Activated CD4-positive, alpha-beta memory T cell treated with anti-CD3 and anti-CD28 coated beads, Interleukin-2, amount 10 ng/mL, durations not matched to agents 7 days and 5 days (primary cell): ENCODE measurements at regions of chr3 and their contacts with region 1.

Region 1: DNA sequence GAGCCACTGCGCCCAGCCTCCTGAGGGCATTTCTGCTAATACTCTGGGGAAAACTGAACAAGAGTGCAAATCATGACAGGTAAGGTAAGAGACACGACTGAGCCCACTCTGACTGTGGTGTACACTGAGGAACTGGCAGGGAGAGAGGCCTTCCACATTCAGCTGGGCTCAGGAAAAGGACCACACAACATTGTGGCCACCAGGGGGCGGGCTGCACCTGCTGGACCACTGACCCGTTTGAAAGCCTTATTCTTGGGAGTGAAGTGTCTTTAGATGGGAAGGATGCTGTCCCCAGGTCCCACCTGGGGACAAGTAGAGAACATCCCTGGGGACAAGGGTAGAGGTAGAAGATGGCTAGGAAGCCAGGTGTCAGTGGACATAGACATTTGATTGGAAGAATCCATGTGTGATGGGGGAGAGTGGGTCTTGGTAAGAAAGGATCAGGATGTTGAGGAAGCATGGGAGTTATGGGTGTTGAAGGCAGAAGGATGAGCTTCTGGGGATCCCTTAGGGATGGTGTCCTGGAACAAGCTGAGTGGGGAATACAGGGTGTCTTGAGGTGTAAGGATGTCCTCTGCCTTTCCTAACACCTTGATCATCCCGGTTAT is 6.2 kb upstream of the CTDSPL start:
- DNase-seq: peak; percentile 78
- H3K4me3 Mint-ChIP-seq: no peak overlapping the region
- H3K27ac Mint-ChIP-seq: no peak overlapping the region
- H3K4me1 Mint-ChIP-seq: peaks cover 7% of the 10 kb centered on the region
- H3K27me3 Mint-ChIP-seq: peaks cover 4% of the 10 kb centered on the region

Region 2: GRCh38 chr3:37741644-37742043 is 113.8 kb before region 1 on chr3:
- CTCF ChIA-PET with region 1: no interaction called
- POLR2A ChIA-PET with region 1: no interaction called
- DNase-seq: no peak
- H3K4me3 Mint-ChIP-seq: no peak overlapping the region
- H3K27ac Mint-ChIP-seq: no peak overlapping the region
- H3K4me1 Mint-ChIP-seq: no peaks in the 10 kb centered on the region
- H3K27me3 Mint-ChIP-seq: peaks cover 17% of the 10 kb centered on the region

Region 3: GRCh38 chr3:37867144-37867543 is 11.7 kb after region 1 on chr3:
- CTCF ChIA-PET with region 1: interaction called, 10 read pairs
- POLR2A ChIA-PET with region 1: no interaction called
- DNase-seq: no peak
- H3K4me3 Mint-ChIP-seq: no peak overlapping the region
- H3K27ac Mint-ChIP-seq: no peak overlapping the region
- H3K4me1 Mint-ChIP-seq: peaks cover 9% of the 10 kb centered on the region
- H3K27me3 Mint-ChIP-seq: peaks cover 72% of the 10 kb centered on the region

Region 4: DNA sequence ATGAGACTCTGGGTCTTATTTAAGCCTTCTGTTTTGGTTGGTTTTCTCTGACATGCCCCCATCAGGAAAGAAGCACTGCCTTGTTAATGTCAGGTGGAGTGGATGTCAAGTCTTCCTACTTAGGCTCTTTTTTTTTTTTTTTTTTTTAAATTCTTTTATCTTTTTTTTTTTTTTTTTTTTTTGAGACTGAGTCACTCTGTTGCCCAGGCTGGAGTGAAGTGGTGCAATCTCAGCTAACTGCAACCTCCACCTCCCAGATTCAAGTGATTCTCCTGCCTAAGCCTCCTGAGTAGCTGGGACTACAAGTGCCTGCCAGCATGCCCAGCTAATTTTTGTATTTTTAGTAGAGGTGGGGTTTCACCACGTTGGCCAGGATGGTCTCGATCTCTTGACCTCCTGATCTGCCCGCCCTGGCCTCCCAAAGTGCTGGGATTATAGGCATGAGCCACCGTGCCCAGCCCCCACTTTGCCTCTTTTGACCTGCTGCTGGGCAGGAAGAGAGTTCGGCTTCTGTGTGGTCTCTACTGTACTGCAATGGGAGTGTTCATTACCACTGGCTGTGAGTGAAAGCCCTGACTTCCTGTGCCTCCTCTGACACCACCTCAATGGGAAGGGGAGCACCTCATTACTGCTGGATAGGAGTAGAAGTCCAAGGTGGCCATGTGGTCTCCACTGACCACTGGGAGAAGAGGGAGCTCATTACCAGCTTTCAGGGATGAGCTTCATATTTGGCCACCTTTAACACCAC is 17.1 kb after region 1 on chr3:
- CTCF ChIA-PET with region 1: interaction called, 10 read pairs
- POLR2A ChIA-PET with region 1: no interaction called
- DNase-seq: no peak
- H3K4me3 Mint-ChIP-seq: no peak overlapping the region
- H3K27ac Mint-ChIP-seq: no peak overlapping the region
- H3K4me1 Mint-ChIP-seq: peaks cover 3% of the 10 kb centered on the region
- H3K27me3 Mint-ChIP-seq: peaks cover 37% of the 10 kb centered on the region

Region 5: DNA sequence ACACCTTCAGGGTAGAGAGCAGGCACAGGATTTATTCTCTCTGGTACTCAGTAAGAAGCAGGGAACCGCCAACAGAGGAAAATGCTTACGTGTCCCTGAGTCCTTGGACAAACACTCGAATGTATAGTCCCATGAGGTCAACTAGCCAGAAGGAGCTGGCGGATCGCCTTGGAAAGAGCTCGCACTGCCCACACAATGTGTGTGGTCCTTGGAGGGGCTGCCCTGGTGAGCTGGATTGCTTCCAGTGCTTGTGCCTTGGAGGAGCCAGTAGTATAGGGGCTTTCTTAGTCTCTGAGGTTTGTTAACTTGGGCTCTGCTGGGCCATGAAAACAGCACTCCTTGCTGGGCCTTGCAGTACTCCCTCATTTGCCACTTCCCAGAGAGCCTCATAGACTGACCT is 94.4 kb after region 1 on chr3:
- CTCF ChIA-PET with region 1: no interaction called
- POLR2A ChIA-PET with region 1: no interaction called
- DNase-seq: no peak
- H3K4me3 Mint-ChIP-seq: no peak overlapping the region
- H3K27ac Mint-ChIP-seq: no peak overlapping the region
- H3K4me1 Mint-ChIP-seq: peaks cover 1% of the 10 kb centered on the region
- H3K27me3 Mint-ChIP-seq: no peaks in the 10 kb centered on the region

Region 6: GRCh38 chr3:37967260-37967881 is 111.9 kb after region 1 on chr3:
- CTCF ChIA-PET with region 1: interaction called, 129 read pairs
- POLR2A ChIA-PET with region 1: interaction called, 3 read pairs
- DNase-seq: peak; percentile 66
- H3K4me3 Mint-ChIP-seq: no peak overlapping the region
- H3K27ac Mint-ChIP-seq: no peak overlapping the region
- H3K4me1 Mint-ChIP-seq: no peaks in the 10 kb centered on the region
- H3K27me3 Mint-ChIP-seq: peaks cover 9% of the 10 kb centered on the region

Region 7: GRCh38 chr3:37974121-37975083 is 118.9 kb after region 1 on chr3:
- CTCF ChIA-PET with region 1: interaction called, 129 read pairs
- POLR2A ChIA-PET with region 1: no interaction called
- DNase-seq: peak; percentile 76
- H3K4me3 Mint-ChIP-seq: no peak overlapping the region
- H3K27ac Mint-ChIP-seq: no peak overlapping the region
- H3K4me1 Mint-ChIP-seq: peaks cover 6% of the 10 kb centered on the region
- H3K27me3 Mint-ChIP-seq: no peaks in the 10 kb centered on the region

Region 8: GRCh38 chr3:37996785-37997301 is 141.4 kb after region 1 on chr3:
- CTCF ChIA-PET with region 1: interaction called, 13 read pairs
- POLR2A ChIA-PET with region 1: no interaction called
- DNase-seq: peak; percentile 87
- H3K4me3 Mint-ChIP-seq: no peak overlapping the region
- H3K27ac Mint-ChIP-seq: peak overlapping the region; percentile 73
- H3K4me1 Mint-ChIP-seq: peaks cover 66% of the 10 kb centered on the region
- H3K27me3 Mint-ChIP-seq: no peaks in the 10 kb centered on the region